ENCODE measurements at regions of chr2 and their contacts with region 1.

Region 1: DNA sequence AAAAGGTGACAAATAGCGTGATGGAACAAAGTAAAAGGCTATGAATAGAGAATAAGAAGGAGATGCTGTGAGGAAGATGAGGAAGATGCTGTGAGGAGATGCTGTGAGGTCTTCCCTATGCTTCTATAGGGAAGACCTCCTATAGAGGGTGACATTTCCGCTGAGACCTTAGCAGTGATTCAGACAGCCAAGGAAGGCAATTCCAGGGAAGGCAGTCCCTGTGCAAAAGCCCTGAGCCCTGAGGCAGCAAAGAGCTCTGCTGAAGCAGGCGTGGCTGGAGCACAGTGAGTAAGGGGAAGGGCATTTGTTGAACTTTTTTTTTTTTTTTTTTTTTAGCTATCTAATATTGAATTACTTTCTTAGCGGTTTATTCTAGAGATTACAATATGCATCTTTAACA is 142.7 kb upstream of the FOSL2 start:
- DNase-seq: no peak
- H3K4me3 Mint-ChIP-seq: no peak overlapping the region
- H3K27ac Mint-ChIP-seq: peak overlapping the region; percentile 7
- H3K4me1 Mint-ChIP-seq: peaks cover 51% of the 10 kb centered on the region
- H3K27me3 Mint-ChIP-seq: no peaks in the 10 kb centered on the region

Region 2: DNA sequence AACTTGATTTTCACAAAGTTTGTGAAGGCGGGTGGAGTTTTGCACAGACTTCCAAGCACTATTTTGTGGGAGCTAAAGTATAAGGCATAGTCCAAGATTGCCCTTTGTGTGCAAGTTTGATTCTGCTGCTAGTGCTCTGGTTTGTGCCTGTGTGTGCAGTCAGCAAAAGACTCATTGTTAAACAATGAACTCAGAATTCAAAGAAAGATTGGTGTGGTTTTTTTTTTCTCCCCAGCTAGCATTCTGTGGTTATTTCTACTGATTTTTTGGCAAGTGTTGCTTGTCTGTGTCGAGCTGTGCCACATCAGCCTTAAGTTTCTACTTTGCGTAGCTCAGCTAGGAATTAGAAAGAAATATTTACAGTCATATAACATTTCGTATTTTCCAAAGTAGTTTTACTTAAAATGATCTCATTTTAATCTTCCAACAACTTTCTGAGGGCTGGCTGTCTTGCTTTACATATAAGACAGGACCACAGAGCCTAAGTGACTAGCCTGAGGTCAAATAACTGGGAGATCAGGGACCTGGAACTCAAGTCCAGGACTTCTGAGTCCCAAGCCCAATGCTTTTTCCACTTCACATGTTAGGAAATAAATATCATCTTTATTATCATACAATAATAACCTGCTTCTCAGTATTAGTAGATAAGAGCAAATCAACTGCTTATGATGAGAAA is 289.6 kb before region 1 on chr2:
- CTCF ChIA-PET with region 1: no interaction called
- POLR2A ChIA-PET with region 1: interaction called, 12 read pairs
- DNase-seq: peak; percentile 36
- H3K4me3 Mint-ChIP-seq: peak overlapping the region; percentile 31
- H3K27ac Mint-ChIP-seq: peak overlapping the region; percentile 90
- H3K4me1 Mint-ChIP-seq: peaks cover 77% of the 10 kb centered on the region
- H3K27me3 Mint-ChIP-seq: no peaks in the 10 kb centered on the region

Region 3: GRCh38 chr2:28175028-28175427 is 75.0 kb before region 1 on chr2:
- CTCF ChIA-PET with region 1: no interaction called
- POLR2A ChIA-PET with region 1: no interaction called
- DNase-seq: no peak
- H3K4me3 Mint-ChIP-seq: no peak overlapping the region
- H3K27ac Mint-ChIP-seq: no peak overlapping the region
- H3K4me1 Mint-ChIP-seq: peaks cover 19% of the 10 kb centered on the region
- H3K27me3 Mint-ChIP-seq: no peaks in the 10 kb centered on the region

Region 4: DNA sequence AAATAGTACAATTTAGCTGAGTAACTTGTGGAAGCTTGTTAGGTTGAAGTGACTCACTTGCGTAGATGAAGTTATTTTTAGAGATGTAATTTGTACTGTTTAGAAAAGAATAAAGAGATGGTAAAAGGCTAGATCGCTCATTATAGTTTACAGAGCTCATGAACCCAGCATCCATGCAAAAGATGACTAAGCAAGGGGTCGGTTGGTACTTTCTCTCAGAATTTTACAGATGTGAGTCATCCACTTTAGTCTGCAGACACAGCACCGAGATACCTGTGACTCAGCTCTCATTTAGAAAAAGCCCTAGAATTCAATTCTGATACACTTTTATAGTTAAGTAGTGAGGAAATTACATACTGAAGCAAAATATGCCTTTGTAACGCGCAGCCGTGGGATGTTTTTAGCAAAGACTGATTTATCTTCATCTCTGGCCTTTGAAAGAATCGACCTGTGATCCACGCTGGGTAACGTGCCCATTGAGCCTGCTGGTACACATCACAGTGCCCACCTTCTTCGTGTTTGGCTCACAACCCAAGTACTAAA is 26.1 kb after region 1 on chr2:
- CTCF ChIA-PET with region 1: interaction called, 6 read pairs
- POLR2A ChIA-PET with region 1: interaction called, 36 read pairs
- DNase-seq: peak; percentile 42
- H3K4me3 Mint-ChIP-seq: no peak overlapping the region
- H3K27ac Mint-ChIP-seq: peak overlapping the region; percentile 31
- H3K4me1 Mint-ChIP-seq: peaks cover 59% of the 10 kb centered on the region
- H3K27me3 Mint-ChIP-seq: no peaks in the 10 kb centered on the region

Region 5: GRCh38 chr2:28480403-28481049 is 230.5 kb after region 1 on chr2:
- CTCF ChIA-PET with region 1: no interaction called
- POLR2A ChIA-PET with region 1: no interaction called
- DNase-seq: no peak
- H3K4me3 Mint-ChIP-seq: no peak overlapping the region
- H3K27ac Mint-ChIP-seq: no peak overlapping the region
- H3K4me1 Mint-ChIP-seq: no peaks in the 10 kb centered on the region
- H3K27me3 Mint-ChIP-seq: peaks cover 3% of the 10 kb centered on the region